ENCODE measurements at regions of chr12 and their contacts with region 1.

Region 1: GRCh38 chr12:13362260-13362841 is 165.8 kb downstream of the EMP1 start:
- DNase-seq: peak; percentile 48
- H3K4me3 ChIP-seq: no peak overlapping the region
- H3K27ac ChIP-seq: no peak overlapping the region
- H3K4me1 ChIP-seq: no peaks in the 10 kb centered on the region
- H3K27me3 ChIP-seq: peaks cover 3 to 13% of the 10 kb centered on the region in 2 experiments
- CTCF ChIP-seq: peak; percentile 86
- POLR2A ChIP-seq: no peak

Region 2: DNA sequence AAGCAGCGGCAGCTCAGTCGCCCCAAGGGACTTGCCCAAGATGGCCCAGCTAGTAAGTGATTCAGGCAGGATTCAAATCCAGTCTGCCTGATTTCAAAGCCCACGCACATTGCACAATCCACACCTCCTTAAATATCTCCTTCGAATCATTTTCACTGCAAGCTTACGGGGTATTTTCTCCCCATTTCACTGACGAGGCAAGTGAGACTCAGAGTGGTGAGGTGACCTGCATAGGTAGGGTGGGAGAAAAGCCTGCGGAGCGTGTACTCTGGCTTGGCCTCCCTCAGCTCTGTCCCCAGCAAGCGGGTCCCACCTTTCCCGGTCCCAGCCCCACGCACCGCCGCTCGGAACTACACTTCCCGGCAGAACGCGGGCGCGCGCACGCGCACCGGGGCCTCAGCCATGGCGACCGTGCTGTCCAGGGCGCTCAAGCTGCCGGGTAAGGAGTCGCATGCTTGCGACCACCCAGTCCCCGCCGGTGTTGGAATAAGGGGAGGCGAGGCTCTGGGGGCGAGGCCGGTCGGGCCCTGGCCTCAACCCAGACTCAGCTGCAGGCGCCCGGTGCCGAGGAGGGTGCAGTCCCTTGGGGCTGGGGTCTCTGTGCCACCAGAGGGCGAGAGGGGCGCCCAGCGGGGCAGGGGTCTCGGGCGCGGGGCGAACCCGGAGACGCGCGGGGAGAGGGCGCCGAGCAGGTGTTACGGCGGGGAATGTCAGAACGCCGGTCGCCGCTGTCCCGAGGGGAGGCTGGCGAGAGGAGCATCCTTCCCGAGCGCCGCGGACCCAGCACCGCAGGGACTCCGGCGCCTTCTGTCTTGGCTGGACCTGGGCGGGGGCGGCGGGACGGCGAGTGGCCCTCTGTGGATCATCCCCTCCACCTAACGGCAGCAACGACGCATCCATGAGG is 318.1 kb before region 1 on chr12 and contains the start of gene FAM234B:
- CTCF ChIA-PET with region 1: no interaction called
- POLR2A ChIA-PET with region 1: no interaction called
- dilution Hi-C with region 1: no loop called
- intact Hi-C with region 1: no loop called
- DNase-seq: peak; percentile 70
- H3K4me3 ChIP-seq: peak within 1 kb of the TSS; percentile 66 to 85 (median 79)
- H3K27ac ChIP-seq: no peak within 1 kb of the TSS
- H3K4me1 ChIP-seq: peaks cover 10% of the 10 kb centered on the region
- H3K27me3 ChIP-seq: peaks cover 2% of the 10 kb centered on the region in 2 experiments
- CTCF ChIP-seq: peak; percentile 9 to 21
- POLR2A ChIP-seq: no peak
- total RNA-seq, gene FAM234B: 9.4 and 13.2 TPM in 2 replicates

Region 3: DNA sequence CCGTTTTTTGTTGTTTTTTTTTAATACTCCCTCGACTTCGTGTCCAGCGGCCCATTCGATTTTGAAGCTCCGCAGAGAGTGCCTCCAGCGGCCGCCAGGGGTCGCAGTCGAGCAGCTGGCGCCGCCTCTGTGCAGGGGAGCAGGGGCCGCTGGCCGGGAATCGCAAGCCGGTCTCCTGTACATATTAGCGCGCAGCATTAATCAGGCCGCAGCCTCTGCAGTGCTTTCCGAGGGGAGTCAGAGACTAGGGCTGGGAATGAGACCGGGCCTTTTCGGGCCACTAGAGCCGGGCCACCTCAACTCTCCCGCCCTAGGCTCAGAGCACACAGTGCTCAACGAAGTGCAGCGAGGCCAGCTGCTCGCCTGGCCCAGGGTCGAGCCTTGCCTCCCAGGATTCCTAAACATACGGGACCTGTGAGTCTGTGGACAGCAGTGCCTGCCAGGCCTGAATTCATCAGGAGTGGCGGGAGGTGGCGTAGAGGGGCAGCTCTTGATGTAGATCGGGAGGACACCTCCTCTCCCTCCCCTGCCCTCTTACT is 84.0 kb before region 1 on chr12:
- CTCF ChIA-PET with region 1: interaction called, 7 read pairs
- POLR2A ChIA-PET with region 1: no interaction called
- dilution Hi-C with region 1: no loop called
- intact Hi-C with region 1: loop called (anchors 5 kb)
- DNase-seq: peak; percentile 72
- H3K4me3 ChIP-seq: no peak overlapping the region
- H3K27ac ChIP-seq: no peak overlapping the region
- H3K4me1 ChIP-seq: no peaks in the 10 kb centered on the region
- H3K27me3 ChIP-seq: peaks cover 35 to 48% of the 10 kb centered on the region in 2 experiments
- CTCF ChIP-seq: peak; percentile 99
- POLR2A ChIP-seq: no peak

Region 4: DNA sequence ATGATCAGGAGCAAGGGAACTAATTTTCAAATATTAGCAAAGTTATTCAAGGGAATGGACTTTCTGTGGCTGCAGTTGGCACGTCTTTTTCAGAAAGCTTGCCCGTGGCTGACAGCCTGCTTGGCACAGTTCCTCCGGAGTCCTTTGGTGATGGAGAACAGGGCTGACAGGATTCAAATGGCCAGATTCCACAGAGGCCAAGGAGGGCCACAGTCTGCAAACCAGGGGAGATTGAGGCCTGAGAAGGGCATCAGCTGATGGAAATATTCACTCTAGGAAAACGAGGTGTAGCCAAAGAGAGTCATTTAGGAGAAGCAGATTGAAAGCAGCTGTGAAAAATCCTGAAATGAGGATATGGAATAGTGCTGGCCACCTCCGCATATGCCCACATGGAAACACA is 12.4 kb after region 1 on chr12:
- CTCF ChIA-PET with region 1: interaction called, 48 read pairs
- POLR2A ChIA-PET with region 1: no interaction called
- dilution Hi-C with region 1: no loop called
- intact Hi-C with region 1: no loop called
- DNase-seq: no peak
- H3K4me3 ChIP-seq: no peak overlapping the region
- H3K27ac ChIP-seq: no peak overlapping the region
- H3K4me1 ChIP-seq: no peaks in the 10 kb centered on the region
- H3K27me3 ChIP-seq: peaks cover 0 to 2% of the 10 kb centered on the region in 2 experiments
- CTCF ChIP-seq: no peak
- POLR2A ChIP-seq: no peak

Region 5: GRCh38 chr12:13534645-13535398 is 172.5 kb after region 1 on chr12:
- CTCF ChIA-PET with region 1: interaction called, 23 read pairs
- POLR2A ChIA-PET with region 1: no interaction called
- dilution Hi-C with region 1: no loop called
- intact Hi-C with region 1: loop called (anchors 1 kb)
- DNase-seq: peak; percentile 68
- H3K4me3 ChIP-seq: no peak overlapping the region
- H3K27ac ChIP-seq: no peak overlapping the region
- H3K4me1 ChIP-seq: no peaks in the 10 kb centered on the region
- H3K27me3 ChIP-seq: peaks cover 0 to 3% of the 10 kb centered on the region in 2 experiments
- CTCF ChIP-seq: peak; percentile 89 to 98
- POLR2A ChIP-seq: no peak

Region 6: DNA sequence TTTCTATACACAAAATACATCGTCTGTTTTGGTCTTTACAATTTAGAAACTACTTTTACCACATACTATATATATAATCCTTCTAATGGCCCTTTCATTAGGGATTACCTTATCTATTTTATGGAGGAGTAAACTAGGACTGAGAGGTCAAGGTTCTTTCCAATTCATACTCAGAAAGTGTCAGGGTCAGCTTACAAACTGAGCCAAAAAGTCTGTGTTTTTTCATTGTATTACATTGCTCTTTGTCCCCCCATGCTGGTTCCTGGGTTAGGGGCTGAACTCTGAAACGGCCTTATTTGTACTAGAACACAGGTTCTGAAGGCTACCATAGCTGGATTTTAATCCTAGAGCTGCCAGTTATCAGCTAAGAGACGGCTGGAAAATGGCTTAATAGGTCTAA is 250.9 kb after region 1 on chr12:
- CTCF ChIA-PET with region 1: no interaction called
- POLR2A ChIA-PET with region 1: no interaction called
- dilution Hi-C with region 1: no loop called
- intact Hi-C with region 1: no loop called
- DNase-seq: no peak
- H3K4me3 ChIP-seq: no peak overlapping the region
- H3K27ac ChIP-seq: no peak overlapping the region
- H3K4me1 ChIP-seq: no peaks in the 10 kb centered on the region
- H3K27me3 ChIP-seq: no peaks in the 10 kb centered on the region
- CTCF ChIP-seq: no peak
- POLR2A ChIP-seq: no peak

Region 7: GRCh38 chr12:14167005-14167628 is 804.8 kb after region 1 on chr12:
- CTCF ChIA-PET with region 1: interaction called, 15 read pairs
- POLR2A ChIA-PET with region 1: no interaction called
- dilution Hi-C with region 1: no loop called
- intact Hi-C with region 1: loop called (anchors 2 kb)
- DNase-seq: peak; percentile 58
- H3K4me3 ChIP-seq: no peak overlapping the region
- H3K27ac ChIP-seq: no peak overlapping the region
- H3K4me1 ChIP-seq: no peaks in the 10 kb centered on the region
- H3K27me3 ChIP-seq: no peaks in the 10 kb centered on the region
- CTCF ChIP-seq: peak; percentile 86 to 89
- POLR2A ChIP-seq: no peak

Measured in endothelial cell of umbilical vein (primary cell).